GM18951 (cell line): ENCODE measurements at regions of chr19 and their contacts with region 1.

Region 1: GRCh38 chr19:35462476-35462953 is 14.5 kb downstream of the FFAR2 start:
- POLR2A ChIP-seq: no peak

Region 2: DNA sequence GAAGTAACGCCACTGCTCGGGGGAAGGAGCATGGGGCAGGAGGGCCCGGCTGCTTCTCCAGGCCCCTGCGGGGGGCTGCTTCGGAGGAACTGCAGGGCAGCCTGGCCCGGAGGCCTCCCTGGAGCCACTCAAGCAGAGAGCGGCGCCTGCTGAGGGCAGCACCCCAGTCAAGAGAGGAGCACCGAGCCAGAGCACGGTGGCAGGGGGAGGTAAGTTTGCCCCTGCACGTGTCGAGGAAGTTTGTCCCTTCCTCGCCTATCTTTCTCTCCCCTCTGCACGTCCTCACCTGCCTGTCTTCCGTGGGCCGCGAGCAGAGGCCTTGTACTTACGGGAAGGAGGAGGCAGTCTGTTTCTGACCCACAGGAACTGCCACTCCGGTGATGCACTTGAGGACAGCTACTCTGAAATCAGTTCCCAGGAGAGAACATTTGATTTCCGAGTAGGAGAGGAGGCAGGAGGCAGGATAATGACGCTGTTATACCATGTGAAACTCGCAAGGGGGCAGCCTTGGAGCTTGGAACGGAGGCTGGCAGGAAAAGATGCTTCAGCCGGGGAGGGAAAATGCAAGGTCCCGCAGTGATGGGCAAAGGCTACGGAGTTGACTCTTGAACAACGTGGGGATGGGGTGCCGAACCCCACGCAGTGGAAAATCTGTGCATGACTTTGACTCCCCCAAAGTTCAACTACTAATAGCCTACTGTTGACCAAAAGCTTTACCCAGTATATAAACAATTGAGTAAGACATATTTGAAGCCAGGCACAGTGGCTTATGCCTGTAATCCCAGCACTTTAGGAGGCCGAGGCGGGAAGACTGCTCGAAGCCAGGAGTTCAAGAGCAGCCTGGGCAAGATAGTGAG is 109.8 kb before region 1 on chr19:
- in situ Hi-C with region 1: no loop called
- POLR2A ChIP-seq: no peak

Region 3: GRCh38 chr19:35421362-35421761 is 41.2 kb before region 1 on chr19:
- in situ Hi-C with region 1: loop called (anchors 5 kb)
- POLR2A ChIP-seq: no peak